Caco-2 (cell line): ENCODE measurements at regions of chr2 and their contacts with region 1.

Region 1: DNA sequence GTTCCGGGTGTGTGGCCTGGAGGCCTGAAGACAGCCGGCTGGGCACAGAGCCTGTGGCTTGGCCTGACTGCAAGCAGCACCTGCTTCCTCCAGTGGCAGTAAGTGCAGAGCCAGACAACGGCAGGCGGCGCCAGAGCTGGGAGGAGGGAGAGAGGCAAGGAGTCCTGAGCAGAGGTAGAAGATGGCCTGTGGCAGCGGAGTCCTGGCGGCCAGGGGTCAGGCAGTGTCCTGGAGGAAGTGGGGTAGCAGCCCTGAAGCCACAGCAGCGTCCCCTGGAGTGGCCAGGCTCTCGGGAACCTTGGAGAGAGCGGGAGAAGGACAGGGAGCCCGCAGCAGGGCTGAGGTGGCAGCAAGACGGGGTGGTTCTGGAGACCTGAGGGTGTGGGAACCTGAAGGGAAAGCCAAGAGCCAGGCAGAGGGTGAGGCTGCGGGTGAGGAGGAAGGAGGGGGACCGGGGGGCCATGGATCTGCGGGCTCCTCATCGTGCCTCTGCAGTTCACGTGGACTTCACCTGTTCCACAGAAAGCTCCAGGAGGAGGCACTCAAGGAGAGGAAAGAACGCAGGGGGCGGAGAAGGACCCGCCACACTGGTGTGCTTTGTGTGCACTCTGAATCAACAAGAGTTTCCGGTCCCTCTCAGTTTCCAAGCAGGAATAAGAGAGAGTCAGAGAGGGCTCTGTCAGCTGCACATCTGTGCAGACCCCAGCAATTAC is 85.9 kb downstream of the USP40 start:
- DNase-seq: peak in 1 of 2 experiments; percentile 36
- H3K4me3 ChIP-seq: no peak overlapping the region
- H3K4me3 Mint-ChIP-seq: peak overlapping the region; percentile 31
- H3K27ac Mint-ChIP-seq: peak overlapping the region; percentile 42
- H3K4me1 ChIP-seq: peaks cover 7% of the 10 kb centered on the region
- H3K4me1 Mint-ChIP-seq: peaks cover 11% of the 10 kb centered on the region
- H3K27me3 ChIP-seq: no peaks in the 10 kb centered on the region
- H3K27me3 Mint-ChIP-seq: no peaks in the 10 kb centered on the region
- CTCF ChIP-seq: no peak

Region 2: DNA sequence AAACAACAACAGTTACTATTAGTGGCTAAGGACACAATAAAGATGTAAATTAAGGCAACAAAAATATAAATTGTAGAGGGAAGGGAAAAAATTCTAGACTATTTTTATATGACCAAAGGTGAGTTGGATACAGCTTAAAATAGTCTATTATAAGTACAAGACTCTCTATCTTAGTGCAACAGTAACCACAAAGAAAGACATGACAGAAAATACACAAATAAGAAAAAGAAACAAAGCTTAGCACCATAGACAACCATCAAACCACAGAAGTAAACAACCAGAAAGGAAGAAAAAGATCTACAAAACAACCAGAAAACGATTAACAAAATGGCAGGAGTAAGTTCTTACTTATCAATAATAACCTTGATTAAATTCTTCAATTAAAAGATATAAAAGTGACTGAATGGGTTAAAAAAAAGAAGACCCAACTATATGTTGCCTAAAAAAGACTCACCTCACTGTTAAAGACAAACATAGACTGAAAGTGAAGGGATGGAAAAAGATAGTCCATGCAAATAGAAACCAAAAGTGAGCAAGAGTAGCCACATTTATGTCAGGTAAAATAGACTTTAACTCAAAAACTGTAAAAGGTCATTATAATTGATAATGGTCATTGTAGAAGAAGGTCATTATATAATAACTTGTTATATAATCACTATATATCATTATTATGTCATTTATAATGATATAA is 23.4 kb after region 1 on chr2:
- CTCF ChIA-PET with region 1: no interaction called
- POLR2A ChIA-PET with region 1: no interaction called
- intact Hi-C with region 1: no loop called
- DNase-seq: no peak
- H3K4me3 ChIP-seq: no peak overlapping the region
- H3K4me3 Mint-ChIP-seq: no peak overlapping the region
- H3K27ac Mint-ChIP-seq: no peak overlapping the region
- H3K4me1 ChIP-seq: no peaks in the 10 kb centered on the region
- H3K4me1 Mint-ChIP-seq: no peaks in the 10 kb centered on the region
- H3K27me3 ChIP-seq: no peaks in the 10 kb centered on the region
- H3K27me3 Mint-ChIP-seq: no peaks in the 10 kb centered on the region
- CTCF ChIP-seq: no peak

Region 3: DNA sequence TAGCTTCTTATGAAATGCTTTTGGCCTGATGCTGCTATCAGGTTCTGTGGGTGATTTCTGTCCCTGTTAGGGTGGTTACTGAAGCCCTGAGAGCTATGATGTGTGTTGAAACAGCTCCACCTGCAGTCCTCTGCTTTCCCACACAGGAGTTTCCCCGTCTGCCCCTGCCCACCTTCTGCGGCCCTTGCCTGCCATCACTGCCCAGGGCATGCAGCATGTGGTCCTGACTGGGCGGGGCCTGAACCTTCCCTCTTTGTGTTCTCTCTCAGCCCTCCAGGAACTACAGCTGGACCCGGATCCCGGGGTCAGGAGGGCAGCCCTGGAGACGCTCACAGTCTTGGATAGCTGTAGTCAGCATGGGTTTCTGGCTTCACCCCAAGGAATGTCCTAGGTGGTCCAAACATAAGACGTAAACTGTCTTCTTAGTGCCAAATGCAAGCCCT is 352.2 kb after region 1 on chr2:
- CTCF ChIA-PET with region 1: interaction called, 4 read pairs
- POLR2A ChIA-PET with region 1: no interaction called
- intact Hi-C with region 1: loop called (anchors 5 kb)
- DNase-seq: peak; percentile 47 to 55
- H3K4me3 ChIP-seq: no peak overlapping the region
- H3K4me3 Mint-ChIP-seq: no peak overlapping the region
- H3K27ac Mint-ChIP-seq: no peak overlapping the region
- H3K4me1 ChIP-seq: no peaks in the 10 kb centered on the region
- H3K4me1 Mint-ChIP-seq: no peaks in the 10 kb centered on the region
- H3K27me3 ChIP-seq: no peaks in the 10 kb centered on the region
- H3K27me3 Mint-ChIP-seq: no peaks in the 10 kb centered on the region
- CTCF ChIP-seq: peak; percentile 34 to 36